PC-3 (cell line): ENCODE measurements at regions of chr11 and their contacts with region 1.

Region 1: GRCh38 chr11:68632802-68633201 is 51.5 kb upstream of the GAL start:
- DNase-seq: peak; percentile 88
- ATAC-seq: peak; percentile 97
- H3K4me3 ChIP-seq: no peak overlapping the region
- H3K27ac ChIP-seq: no peak overlapping the region
- H3K4me1 ChIP-seq: no peaks in the 10 kb centered on the region
- H3K27me3 ChIP-seq: peaks cover 14% of the 10 kb centered on the region
- CTCF ChIP-seq: peak; percentile 97

Region 2: DNA sequence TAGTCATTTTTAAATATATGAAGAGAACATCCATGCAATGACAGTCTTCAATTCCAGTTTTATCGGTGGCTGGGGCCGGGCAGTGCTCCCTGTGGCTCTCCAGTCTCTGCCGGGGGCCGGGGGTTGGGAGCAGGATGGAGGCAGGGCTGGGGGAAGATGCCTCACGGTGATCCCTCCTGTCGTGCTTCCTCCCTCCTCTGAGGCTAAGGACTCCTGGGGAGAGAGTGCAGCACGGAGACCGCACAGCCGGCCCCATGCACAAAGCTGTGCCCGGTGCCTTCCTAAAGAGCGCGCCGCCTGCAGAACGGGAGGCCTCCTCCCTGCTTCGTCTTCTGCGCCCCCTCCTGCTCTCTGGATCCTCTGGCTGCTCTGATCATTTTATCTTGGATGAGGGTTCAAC is 72.1 kb after region 1 on chr11:
- CTCF ChIA-PET with region 1: no interaction called
- POLR2A ChIA-PET with region 1: no interaction called
- intact Hi-C with region 1: no loop called
- DNase-seq: no peak
- ATAC-seq: no peak
- H3K4me3 ChIP-seq: no peak overlapping the region
- H3K27ac ChIP-seq: no peak overlapping the region
- H3K4me1 ChIP-seq: no peaks in the 10 kb centered on the region
- H3K27me3 ChIP-seq: peaks cover 16% of the 10 kb centered on the region; the same call in 1 of the 2 replicates
- CTCF ChIP-seq: no peak

Region 3: GRCh38 chr11:68749229-68750123 is 116.7 kb after region 1 on chr11:
- CTCF ChIA-PET with region 1: interaction called, 4 read pairs
- POLR2A ChIA-PET with region 1: no interaction called
- intact Hi-C with region 1: loop called (anchors 5 kb)
- DNase-seq: no peak
- ATAC-seq: no peak
- H3K4me3 ChIP-seq: no peak overlapping the region
- H3K27ac ChIP-seq: no peak overlapping the region
- H3K4me1 ChIP-seq: peaks cover 15% of the 10 kb centered on the region
- H3K27me3 ChIP-seq: no peaks in the 10 kb centered on the region
- CTCF ChIP-seq: no peak

Region 4: GRCh38 chr11:68950268-68950667 is 317.5 kb after region 1 on chr11:
- CTCF ChIA-PET with region 1: interaction called, 5 read pairs
- POLR2A ChIA-PET with region 1: no interaction called
- intact Hi-C with region 1: loop called (anchors 5 kb)
- DNase-seq: peak; percentile 53
- ATAC-seq: peak; percentile 80
- H3K4me3 ChIP-seq: no peak overlapping the region
- H3K27ac ChIP-seq: no peak overlapping the region
- H3K4me1 ChIP-seq: peaks cover 4% of the 10 kb centered on the region; the same call in 1 of the 2 replicates
- H3K27me3 ChIP-seq: no peaks in the 10 kb centered on the region
- CTCF ChIP-seq: peak; percentile 64; the same call in 1 of the 2 replicates